ENCODE measurements at regions of chr19 and their contacts with region 1.

Region 1: DNA sequence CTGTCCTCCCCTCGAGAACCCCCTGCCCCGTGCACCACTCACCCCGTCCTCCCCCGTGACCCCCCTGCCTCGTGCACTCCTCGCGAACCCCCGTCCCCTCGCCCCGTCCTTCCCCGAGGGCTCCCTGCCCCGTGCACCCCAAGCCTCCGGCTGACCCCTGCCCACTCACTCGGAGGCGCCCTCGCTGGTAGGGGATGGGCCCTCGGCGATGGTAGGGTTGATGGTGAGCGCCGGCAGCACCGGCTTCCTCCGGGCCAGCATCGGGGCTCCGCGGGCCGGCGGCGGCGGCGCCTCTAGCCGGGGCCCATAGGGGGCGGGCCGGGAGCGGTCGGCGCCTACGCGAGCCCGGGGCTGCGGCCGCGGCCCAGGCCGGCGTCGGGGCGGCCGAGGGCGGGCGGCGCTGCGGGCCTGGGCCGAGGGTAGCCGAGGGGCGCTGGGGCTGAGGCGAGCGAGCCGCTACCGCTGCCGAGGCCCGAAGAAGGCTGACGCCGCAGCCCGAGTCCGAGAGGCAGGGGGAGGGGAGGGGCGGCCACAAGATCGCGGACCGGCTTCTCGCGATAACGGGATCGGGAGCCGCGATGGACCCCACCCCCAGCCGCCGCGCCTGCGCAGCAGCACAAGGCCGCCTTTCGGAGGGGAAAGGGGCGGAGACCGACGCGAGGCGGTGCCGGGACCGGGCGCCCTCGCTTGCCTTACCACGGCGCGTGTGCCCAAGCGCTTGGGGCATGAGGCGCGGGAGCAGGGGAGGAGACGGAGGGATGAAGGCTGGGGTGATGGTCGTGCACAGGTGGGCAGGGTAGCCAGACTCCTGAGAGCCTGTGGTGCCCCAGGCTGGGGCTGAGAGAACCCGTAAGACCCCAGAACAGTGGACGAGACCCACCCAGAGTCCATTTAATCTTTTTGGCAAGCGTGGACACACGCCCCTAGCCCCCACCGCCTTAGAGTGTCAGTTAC is at the start of gene MAP2K2:
- DNase-seq: peak; percentile 95 to 98
- ATAC-seq: peak; percentile 96 to 99 (median 99)
- H3K4me3 ChIP-seq: peak within 1 kb of the TSS; percentile 60 to 88 (median 68)
- H3K27ac ChIP-seq: peak within 1 kb of the TSS; percentile 33 to 91 (median 74)
- H3K4me1 ChIP-seq: peaks cover 6 to 33% (median 23%) of the 10 kb centered on the region in 9 donors
- H3K27me3 ChIP-seq: no peaks in the 10 kb centered on the region
- CTCF ChIP-seq: peak in 1 of 9 donors; percentile 16
- total RNA-seq, gene MAP2K2: 91.5 to 155 (median 101) TPM

Region 2: GRCh38 chr19:4007021-4007835 is 116.7 kb before region 1 on chr19 and contains the start of gene PIAS4:
- intact Hi-C with region 1: loop called in 1 of 10 experiments (anchors 5 kb)
- DNase-seq: peak; percentile 95 to 97
- ATAC-seq: peak; percentile 94 to 97 (median 96)
- H3K4me3 ChIP-seq: peak within 1 kb of the TSS; percentile 76 to 99 (median 90)
- H3K27ac ChIP-seq: peak within 1 kb of the TSS; percentile 81 to 95 (median 90)
- H3K4me1 ChIP-seq: peaks cover 31 to 47% (median 41%) of the 10 kb centered on the region in 9 donors
- H3K27me3 ChIP-seq: no peaks in the 10 kb centered on the region
- CTCF ChIP-seq: peak in 2 of 9 donors; percentile 8 to 13
- total RNA-seq, gene PIAS4: 11.5 to 22.8 (median 14.3) TPM

Region 3: DNA sequence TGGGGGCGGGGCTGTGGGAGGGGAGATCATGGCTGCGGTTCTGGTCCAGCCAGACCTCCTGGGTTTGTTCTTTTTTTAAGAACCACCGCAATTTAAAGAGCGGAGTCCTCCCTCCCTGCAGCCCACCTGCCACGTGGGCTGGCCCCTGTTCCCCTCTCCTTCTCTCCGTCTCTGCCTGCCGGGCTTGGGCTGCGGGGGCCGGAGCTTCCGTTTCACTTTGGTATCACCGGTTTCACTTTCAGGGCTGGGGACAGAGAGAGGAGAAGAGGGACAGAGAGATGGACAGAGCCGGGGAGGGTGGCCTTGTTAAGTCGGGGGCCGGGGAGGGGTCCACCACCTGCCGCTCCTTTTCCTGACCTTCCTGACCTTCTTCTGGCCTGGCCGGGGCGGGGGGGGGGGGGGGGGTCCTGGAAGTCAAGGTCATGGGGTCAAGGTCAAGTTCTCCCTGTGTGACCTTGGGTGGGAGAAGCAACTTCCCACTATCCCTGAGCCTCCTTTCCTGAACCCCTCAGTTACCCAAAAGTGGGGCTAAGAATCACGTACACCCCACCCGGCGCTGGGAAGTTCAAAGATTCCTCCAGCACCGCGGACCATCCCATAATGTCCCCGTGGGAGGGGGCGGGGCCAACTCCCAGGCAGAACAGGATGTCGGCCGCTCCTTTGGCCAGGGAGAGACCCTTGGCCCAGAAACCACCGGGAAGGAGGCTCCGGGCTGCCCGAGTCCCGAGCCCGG is 45.8 kb before region 1 on chr19:
- intact Hi-C with region 1: loop called in 2 of 10 experiments (anchors 5 kb)
- DNase-seq: peak; percentile 84 to 88
- ATAC-seq: peak; percentile 71 to 94 (median 90)
- H3K4me3 ChIP-seq: peak overlapping the region; percentile 18 to 65 (median 59)
- H3K27ac ChIP-seq: peak overlapping the region; percentile 73 to 95 (median 90)
- H3K4me1 ChIP-seq: peaks cover 9 to 34% (median 18%) of the 10 kb centered on the region in 9 donors
- H3K27me3 ChIP-seq: no peaks in the 10 kb centered on the region
- CTCF ChIP-seq: no peak

Region 4: DNA sequence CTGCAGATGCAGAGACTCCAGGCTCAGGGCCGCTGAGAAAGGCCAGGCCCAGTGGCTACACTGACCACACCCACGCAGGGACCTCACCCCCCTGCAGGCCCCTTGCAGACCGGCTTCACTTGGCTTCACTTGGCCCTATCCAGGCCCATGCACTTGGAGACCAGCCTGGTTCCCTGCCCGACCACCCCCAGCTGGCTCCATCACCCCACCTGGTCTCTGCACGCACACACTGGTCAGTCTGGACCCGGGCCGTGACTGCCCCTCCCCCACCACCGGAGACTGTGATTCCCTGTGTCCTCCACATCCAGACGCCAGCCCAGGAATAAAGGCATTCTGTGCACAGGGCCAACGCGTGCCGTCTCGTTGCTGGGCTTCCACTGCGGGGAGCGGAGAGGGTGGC is 100.6 kb after region 1 on chr19:
- intact Hi-C with region 1: no loop called
- DNase-seq: no peak
- ATAC-seq: no peak
- H3K4me3 ChIP-seq: no peak overlapping the region
- H3K27ac ChIP-seq: no peak overlapping the region
- H3K4me1 ChIP-seq: peaks cover 0 to 9% (median 0%) of the 10 kb centered on the region in 9 donors
- H3K27me3 ChIP-seq: peaks cover 0 to 26% (median 18%) of the 10 kb centered on the region in 7 donors
- CTCF ChIP-seq: no peak

Region 5: DNA sequence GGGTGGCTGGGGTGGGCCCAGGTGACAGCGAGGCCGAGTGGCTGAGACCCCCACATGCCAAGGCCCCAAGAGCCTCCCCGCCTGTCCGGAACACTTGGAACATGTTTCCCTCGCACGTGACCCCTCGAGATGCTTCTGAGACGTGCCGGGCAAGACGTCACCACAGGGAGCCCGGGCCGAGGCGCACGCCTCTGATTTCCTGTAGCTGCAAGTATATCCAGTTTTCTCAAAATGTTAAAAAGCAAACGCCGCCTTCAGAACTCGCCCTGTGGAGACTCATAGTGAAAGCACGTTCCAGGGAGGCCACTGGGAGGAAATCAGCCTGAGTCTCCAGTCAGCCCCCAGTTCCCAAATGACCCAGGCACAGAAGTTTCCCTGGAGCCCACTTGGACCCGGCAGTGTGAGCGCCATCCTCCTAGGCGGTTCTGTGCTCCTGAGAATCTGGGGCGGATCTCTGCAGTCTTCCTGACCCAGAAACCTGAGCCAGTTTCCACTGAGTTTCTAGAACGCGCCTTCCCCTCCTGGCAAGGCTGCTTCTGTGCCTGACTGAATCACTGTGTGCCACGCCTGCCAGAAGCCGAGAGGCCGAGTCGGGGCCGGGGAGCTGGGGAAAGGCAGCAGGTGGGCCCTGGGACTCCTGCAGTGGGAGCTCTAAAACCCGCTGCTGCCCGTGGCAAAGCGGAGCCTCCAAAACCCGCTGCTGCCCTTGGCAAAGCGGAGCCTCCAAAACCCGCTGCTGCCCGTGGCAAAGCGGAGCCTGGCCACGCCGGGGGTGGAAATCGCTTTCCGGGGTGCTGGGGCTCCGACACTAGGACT is 1024.3 kb after region 1 on chr19:
- intact Hi-C with region 1: loop called in 1 of 10 experiments (anchors 5 kb)
- DNase-seq: peak in 1 of 2 donors; percentile 25
- ATAC-seq: no peak
- H3K4me3 ChIP-seq: no peak overlapping the region
- H3K27ac ChIP-seq: no peak overlapping the region
- H3K4me1 ChIP-seq: no peaks in the 10 kb centered on the region
- H3K27me3 ChIP-seq: no peaks in the 10 kb centered on the region
- CTCF ChIP-seq: no peak